ENCODE measurements at regions of chr3 and their contacts with region 1.

Region 1: DNA sequence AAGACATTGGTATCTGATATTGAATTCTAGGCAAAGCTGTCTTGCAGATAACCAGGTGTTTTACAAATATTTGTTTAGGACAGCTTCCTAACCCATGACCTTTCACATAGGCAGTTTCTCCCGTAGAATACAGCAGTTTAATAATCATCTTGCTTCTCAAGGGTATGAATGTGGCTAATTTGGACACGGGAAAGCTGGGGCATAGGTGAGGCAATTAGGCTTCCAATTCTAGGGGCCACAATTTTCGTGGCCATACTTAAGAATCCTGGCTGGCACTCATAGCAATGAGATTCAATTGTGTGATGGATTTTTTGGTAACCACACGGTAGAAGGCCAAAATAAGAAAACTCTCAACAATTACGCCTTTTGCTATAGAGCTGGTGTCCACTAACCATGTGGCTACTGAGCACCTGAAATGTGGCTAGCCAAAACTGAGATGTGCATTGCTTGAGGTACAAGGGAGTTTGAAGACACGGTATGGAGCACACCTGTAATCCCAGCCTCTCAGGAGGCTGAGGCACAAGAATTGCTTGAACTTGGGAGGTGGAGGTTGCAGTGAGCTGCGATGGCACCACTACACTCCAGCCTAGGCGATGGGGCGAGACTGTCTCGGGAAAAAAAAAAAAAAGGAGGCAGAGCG is 34.4 kb downstream of the TFRC start:
- DNase-seq: peak in 2 of 4 experiments; percentile 21 to 46
- ATAC-seq: peak; percentile 48
- H3K4me3 ChIP-seq: no peak overlapping the region
- H3K27ac ChIP-seq: peak overlapping the region; percentile 23; the same call in 2 of the 3 replicates
- H3K4me1 ChIP-seq: no peaks in the 10 kb centered on the region; a peak in 1 of 5 replicates
- H3K27me3 ChIP-seq: no peaks in the 10 kb centered on the region
- CTCF ChIP-seq: no peak
- EP300 ChIP-seq: no peak
- POLR2A ChIP-seq: peak; percentile 77
- RAD21 ChIP-seq: no peak

Region 2: GRCh38 chr3:196063456-196063855 is 15.9 kb after region 1 on chr3:
- CTCF ChIA-PET with region 1: no interaction called
- POLR2A ChIA-PET with region 1: interaction called, 16 read pairs
- in situ Hi-C with region 1: no loop called
- intact Hi-C with region 1: no loop called
- DNase-seq: no peak
- ATAC-seq: no peak
- H3K4me3 ChIP-seq: no peak overlapping the region
- H3K27ac ChIP-seq: no peak overlapping the region
- H3K4me1 ChIP-seq: no peaks in the 10 kb centered on the region
- H3K27me3 ChIP-seq: no peaks in the 10 kb centered on the region
- CTCF ChIP-seq: no peak
- EP300 ChIP-seq: no peak
- POLR2A ChIP-seq: peak; percentile 54
- RAD21 ChIP-seq: no peak

Region 3: DNA sequence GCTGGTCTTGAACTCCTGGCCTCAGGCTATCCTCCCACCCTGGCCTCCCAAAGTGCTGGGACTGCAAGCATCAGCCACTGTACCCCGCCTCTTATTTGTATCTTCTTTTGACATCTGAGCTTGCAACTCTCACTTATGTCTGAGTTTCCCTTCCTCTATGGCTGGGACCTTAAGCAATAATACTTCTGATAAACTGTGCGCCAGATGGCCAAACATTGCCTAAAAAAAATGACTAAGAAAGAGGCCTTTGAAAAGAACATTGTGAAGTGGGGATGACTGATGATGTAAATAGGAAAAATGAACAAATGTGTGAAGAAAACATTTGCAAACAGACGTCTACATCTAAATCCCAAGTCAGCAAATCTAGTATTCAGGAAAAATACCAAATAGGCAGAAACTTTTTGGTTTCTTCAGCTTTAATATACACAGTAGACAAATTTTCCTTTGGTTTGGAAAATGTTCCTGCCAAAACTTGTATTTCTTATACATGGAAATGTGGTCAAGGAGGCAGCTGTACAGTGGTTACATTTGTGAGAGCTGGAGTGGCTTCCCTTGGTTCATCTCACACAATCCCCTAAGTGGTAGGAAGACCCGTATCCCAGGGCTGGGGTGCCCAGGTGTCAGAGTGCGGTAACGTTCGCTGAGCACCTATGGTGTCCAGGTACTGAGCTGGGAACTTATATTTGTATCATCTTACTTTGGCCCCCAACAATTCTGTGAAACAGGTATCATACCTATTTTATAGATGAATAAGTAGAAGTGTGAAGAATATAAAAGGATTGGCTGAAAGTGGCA is 46.0 kb after region 1 on chr3:
- CTCF ChIA-PET with region 1: no interaction called
- POLR2A ChIA-PET with region 1: no interaction called
- in situ Hi-C with region 1: no loop called
- intact Hi-C with region 1: no loop called
- DNase-seq: no peak
- ATAC-seq: no peak
- H3K4me3 ChIP-seq: no peak overlapping the region
- H3K27ac ChIP-seq: no peak overlapping the region
- H3K4me1 ChIP-seq: peaks cover 4 to 6% of the 10 kb centered on the region in 2 experiments; a peak in 3 of 5 replicates
- H3K27me3 ChIP-seq: no peaks in the 10 kb centered on the region
- CTCF ChIP-seq: no peak
- EP300 ChIP-seq: no peak
- POLR2A ChIP-seq: no peak
- RAD21 ChIP-seq: no peak

Measured in K562 (cell line).